ENCODE measurements at regions of chr7 and their contacts with region 1.

Region 1: DNA sequence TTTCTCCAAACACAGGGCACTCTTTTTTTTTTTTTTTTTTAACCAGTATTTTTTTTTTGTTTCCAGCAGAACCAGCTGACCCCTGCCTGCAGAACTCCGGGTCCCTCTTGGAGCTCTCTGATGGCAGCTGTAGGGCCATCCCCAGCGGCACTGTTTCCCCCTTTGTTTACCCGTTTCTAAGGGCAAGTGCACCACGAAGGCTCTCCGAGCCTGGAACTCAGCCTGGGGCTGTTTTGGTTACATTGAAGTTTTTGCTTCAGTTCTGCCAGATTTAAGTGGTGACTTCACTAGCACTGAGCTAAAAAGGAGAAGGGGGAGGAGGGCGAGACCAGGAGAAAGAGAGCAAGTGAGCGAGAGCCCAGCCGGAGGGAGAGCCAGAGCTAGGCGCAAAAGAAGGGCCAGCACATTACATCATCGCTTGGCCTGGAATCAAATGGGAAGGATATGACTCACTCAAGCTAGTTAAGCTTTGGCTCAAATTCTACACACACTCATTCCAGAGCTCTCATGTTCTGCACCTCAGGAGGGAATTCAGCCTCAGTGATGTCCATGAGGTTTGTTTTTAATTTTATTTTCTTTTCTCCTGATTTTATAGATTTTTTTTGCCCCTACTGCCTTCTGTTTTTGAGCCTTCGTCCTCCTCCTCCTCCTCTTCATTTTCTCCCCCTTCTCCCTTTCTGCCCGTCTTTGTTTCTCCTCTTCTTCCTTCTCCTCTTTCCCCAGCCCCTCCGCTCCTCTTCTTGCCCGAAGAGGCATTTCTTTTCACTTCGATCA is 272.3 kb downstream of the TRIL start:
- DNase-seq: peak; percentile 82 to 98 (median 90)

Region 2: DNA sequence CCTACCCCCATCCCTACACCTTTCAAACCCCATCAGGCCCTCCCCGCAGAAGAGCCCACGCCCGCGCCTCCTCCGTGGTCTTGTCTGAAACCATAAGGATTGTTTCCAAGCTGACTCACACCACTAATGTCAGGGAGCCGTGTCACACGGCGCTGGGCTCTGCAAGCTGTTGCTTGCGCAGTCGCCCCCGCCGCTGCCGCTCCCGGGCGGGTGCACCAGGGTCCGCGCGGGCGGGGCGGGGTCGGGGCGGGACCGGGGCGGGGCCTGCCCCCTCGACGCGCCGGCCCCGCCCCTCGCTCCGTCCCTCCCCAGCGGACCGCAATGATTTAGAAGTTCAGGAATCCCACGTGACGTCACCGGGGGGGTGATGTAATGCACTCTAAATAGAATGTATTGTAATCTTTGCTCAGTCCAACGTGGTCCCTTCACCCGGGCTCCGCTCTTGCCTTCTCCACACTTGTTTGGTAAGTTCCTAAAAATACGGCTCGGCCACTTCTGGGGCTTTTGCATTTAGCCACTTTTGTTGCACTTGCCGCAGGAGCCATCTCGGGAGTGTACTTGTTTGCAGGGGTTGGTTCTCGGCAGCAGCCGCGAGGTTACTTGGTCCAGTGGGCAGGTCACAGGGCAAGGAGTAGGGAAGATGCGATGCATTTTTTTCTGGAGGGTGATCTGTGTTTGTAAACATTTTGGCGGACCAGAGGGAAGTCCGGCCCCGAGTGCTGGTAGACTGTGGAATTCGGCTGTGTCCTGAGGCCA is 276.7 kb before region 1 on chr7:
- intact Hi-C with region 1: loop called (anchors 5 kb)
- DNase-seq: peak; percentile 82 to 99 (median 96)

Region 3: DNA sequence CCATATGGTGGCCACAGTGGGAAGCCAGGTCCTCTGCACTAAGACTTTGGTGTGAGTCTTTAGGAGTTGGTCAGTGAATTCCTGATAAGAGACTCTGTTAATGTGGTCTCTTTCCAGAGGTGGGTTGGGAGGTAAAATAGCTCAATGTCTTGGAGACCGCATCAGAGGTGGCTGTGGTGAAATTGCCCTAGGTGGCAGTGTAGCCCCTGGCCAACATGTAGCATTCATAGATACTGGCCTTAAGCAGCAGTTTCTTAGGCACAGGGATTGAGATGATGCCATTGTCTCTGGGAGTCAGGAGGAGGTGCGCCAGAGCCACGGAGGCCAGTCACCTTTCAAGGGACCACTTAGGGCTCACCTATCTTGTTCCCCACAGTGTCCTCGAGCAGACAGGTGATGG is 70.7 kb before region 1 on chr7:
- intact Hi-C with region 1: loop called (anchors 5 kb)
- DNase-seq: peak in 3 of 10 donors; percentile 14 to 82 (median 39)

Region 4: GRCh38 chr7:28754027-28754426 is 68.2 kb after region 1 on chr7:
- intact Hi-C with region 1: loop called (anchors 1 kb)
- DNase-seq: peak; percentile 61 to 98 (median 81)